ENCODE measurements at regions of chr4 and their contacts with region 1.

Region 1: GRCh38 chr4:122758033-122758432 is 25.5 kb downstream of the BBS12 start:
- DNase-seq: no peak
- ATAC-seq: peak; percentile 62
- H3K4me3 ChIP-seq: no peak overlapping the region
- H3K27ac ChIP-seq: no peak overlapping the region
- H3K4me1 ChIP-seq: peaks cover 3% of the 10 kb centered on the region
- H3K27me3 ChIP-seq: no peaks in the 10 kb centered on the region
- CTCF ChIP-seq: peak; percentile 37 to 84 (median 58)
- POLR2A ChIP-seq: no peak

Region 2: DNA sequence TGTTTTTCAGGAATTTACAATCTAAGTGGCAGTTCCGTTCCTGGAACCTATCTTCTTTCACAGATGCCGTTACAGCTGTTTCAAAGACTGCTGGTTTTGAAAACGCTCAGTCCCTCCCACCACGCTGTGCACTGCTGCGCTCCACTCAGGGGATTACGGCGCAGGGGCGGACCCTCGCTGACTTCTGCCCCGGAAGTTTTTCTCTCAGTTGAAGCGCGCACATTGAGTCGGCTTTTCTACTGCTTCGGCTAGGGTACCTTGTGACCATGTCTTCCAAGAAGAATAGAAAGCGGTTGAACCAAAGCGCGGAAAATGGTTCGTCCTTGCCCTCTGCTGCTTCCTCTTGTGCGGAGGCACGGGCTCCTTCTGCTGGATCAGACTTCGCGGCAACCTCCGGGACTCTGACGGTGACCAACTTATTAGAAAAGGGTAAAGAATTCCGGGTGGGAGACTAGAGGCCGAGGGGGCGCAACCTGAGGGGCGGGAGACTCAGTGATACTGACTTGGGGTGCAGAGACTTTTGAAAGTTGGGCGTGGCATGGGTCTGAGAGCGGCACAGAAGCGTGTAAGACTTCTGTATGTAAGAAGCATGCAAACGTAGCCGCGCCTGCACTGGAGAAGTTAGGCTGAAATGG is 165.0 kb after region 1 on chr4:
- intact Hi-C with region 1: loop called (anchors 10 kb)
- DNase-seq: peak; percentile 73 to 85 (median 82)
- ATAC-seq: peak; percentile 93
- H3K4me3 ChIP-seq: peak overlapping the region; percentile 78 to 89
- H3K27ac ChIP-seq: peak overlapping the region in 3 of 4 donors; percentile 58 to 68 (median 68)
- H3K4me1 ChIP-seq: peaks cover 17% of the 10 kb centered on the region
- H3K27me3 ChIP-seq: no peaks in the 10 kb centered on the region
- CTCF ChIP-seq: peak in 1 of 7 experiments; percentile 2
- POLR2A ChIP-seq: peak in 1 of 3 donors; percentile 16